Calu3 (cell line): ENCODE measurements at regions of chr21 and their contacts with region 1.

Region 1: DNA sequence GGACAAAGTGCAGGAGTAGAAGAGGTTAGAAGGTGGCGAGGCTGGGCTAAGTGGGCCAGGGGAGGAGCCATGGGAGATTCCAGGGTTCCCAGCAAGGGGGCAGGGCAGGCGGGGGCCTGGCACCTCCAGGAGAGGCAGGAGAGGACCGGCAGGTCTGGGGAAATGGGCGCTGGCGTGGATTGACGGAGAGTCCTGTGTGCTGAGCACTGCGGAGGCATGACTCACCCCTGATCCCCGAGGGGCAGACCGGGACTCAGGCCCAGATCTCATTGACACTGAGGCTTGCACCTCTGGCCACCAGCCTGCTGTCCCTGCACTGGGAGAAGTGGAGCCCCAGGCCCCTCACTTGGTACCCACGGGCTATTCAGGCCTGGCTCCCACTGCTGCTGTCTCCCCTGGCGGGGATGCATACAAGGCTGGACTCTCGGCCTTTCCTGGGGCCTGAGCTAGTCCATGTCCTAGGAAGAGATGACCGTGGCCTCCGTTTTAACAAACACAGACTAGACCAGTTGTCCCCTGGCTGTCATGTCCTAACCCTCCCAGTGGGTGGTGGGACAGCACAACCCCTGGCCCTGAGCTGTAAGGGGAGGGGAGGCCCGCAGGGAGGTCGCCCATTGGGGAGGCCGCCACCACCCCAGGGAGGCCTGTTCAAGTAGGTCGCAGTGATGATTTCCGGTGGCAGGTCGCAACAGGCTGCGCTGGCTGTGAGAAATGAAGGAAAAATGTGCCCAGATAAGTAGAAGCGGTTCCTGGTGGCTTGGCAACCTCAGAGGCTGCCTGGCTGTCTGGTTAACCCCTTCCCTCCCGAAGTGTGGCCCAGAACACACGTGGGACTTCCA is 39.7 kb downstream of the RIPK4 start:
- DNase-seq: peak; percentile 72
- H3K4me3 Mint-ChIP-seq: peak overlapping the region; percentile 47
- H3K27ac Mint-ChIP-seq: peak overlapping the region; percentile 84
- H3K4me1 Mint-ChIP-seq: peaks cover 23% of the 10 kb centered on the region
- H3K27me3 Mint-ChIP-seq: no peaks in the 10 kb centered on the region
- CTCF ChIP-seq: no peak

Region 2: GRCh38 chr21:41777951-41778874 is 51.0 kb after region 1 on chr21:
- CTCF ChIA-PET with region 1: interaction called, 20 read pairs
- intact Hi-C with region 1: no loop called
- DNase-seq: peak; percentile 86
- H3K4me3 Mint-ChIP-seq: no peak overlapping the region
- H3K27ac Mint-ChIP-seq: peak overlapping the region; percentile 23
- H3K4me1 Mint-ChIP-seq: peaks cover 29% of the 10 kb centered on the region
- H3K27me3 Mint-ChIP-seq: no peaks in the 10 kb centered on the region
- CTCF ChIP-seq: peak; percentile 77

Region 3: GRCh38 chr21:41966041-41966684 is 239.0 kb after region 1 on chr21:
- CTCF ChIA-PET with region 1: no interaction called
- intact Hi-C with region 1: no loop called
- DNase-seq: no peak
- H3K4me3 Mint-ChIP-seq: no peak overlapping the region
- H3K27ac Mint-ChIP-seq: no peak overlapping the region
- H3K4me1 Mint-ChIP-seq: no peaks in the 10 kb centered on the region
- H3K27me3 Mint-ChIP-seq: peaks cover 20% of the 10 kb centered on the region
- CTCF ChIP-seq: no peak